A673 (cell line): ENCODE measurements at regions of chr6 and their contacts with region 1.

Region 1: GRCh38 chr6:163923658-163924411 is 509.3 kb downstream of the QKI start:
- DNase-seq: no peak
- H3K4me3 ChIP-seq: no peak overlapping the region
- H3K27ac ChIP-seq: no peak overlapping the region
- H3K4me1 ChIP-seq: no peaks in the 10 kb centered on the region
- H3K27me3 ChIP-seq: no peaks in the 10 kb centered on the region
- CTCF ChIP-seq: no peak

Region 2: GRCh38 chr6:163883984-163884383 is 39.9 kb before region 1 on chr6:
- CTCF ChIA-PET with region 1: no interaction called
- POLR2A ChIA-PET with region 1: interaction called, 12 read pairs
- intact Hi-C with region 1: no loop called
- DNase-seq: peak; percentile 55
- H3K4me3 ChIP-seq: no peak overlapping the region
- H3K27ac ChIP-seq: no peak overlapping the region
- H3K4me1 ChIP-seq: no peaks in the 10 kb centered on the region
- H3K27me3 ChIP-seq: no peaks in the 10 kb centered on the region
- CTCF ChIP-seq: no peak